Sigmoid colon (tissue), 7 donors: ENCODE measurements at regions of chr4 and their contacts with region 1.

Region 1: DNA sequence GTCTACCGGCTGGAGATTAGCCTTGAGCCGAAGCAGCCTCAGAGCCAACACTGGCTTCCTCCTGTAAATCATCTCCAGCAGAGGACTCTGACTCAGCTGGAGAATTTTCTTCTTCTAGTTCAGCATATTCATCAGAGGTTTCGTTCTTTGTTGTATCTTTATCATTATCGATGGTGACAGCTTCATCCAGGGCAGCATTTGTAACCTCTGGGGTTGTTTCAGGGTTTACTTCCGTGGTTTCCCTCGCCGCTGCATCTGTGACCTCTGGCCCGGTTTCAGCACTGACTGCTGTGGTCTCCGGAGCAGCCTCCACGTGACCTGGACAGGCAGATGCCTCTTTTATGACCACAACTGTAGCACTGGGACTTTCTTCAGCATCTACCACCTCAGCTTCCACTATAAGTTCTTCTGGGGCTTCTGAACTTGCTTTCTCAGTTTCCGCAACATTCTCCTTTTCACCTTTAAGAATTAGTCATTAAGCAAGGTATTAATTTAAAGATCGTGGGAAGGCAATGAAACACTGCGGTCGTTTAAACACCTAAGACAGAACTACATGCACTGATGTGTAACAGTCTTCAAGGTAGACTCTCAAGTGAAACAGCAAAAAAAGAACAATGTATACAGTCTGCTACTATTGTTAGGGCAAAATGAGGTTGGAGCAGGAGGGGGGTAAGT is 13.3 kb downstream of the MGARP start:
- DNase-seq: peak; percentile 90
- H3K4me3 ChIP-seq: peak overlapping the region; percentile 21 to 52 (median 46)
- H3K27ac ChIP-seq: peak overlapping the region; percentile 34 to 76 (median 65)
- H3K4me1 ChIP-seq: peaks cover 0 to 15% (median 12%) of the 10 kb centered on the region in 4 donors
- H3K27me3 ChIP-seq: no peaks in the 10 kb centered on the region
- CTCF ChIP-seq: no peak
- EP300 ChIP-seq: no peak
- POLR2A ChIP-seq: no peak

Region 2: DNA sequence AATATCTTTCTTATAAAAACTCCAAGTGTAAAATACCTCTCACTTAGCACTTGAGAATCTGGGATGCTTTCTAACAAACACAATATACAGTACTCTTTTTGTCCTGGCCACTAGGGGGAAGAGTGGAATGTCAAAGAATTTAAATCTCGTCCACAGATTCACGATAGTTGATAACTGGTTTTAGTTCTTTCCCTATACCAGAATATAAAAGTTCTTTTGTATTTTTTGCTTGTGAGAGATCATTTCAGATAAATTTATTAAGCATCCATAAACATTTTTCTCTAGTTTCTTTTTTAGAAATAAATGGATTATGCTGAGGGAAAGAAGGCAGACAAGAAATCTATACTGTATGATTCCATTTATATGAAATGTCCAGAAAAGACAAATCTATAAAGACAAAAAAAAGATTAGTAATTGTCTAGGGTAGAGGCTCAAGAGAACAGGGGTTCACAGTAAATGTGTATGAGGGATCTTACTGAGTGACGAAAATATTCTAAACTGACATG is 37.1 kb before region 1 on chr4:
- intact Hi-C with region 1: loop called (anchors 2 kb)
- DNase-seq: no peak
- H3K4me3 ChIP-seq: no peak overlapping the region
- H3K27ac ChIP-seq: no peak overlapping the region
- H3K4me1 ChIP-seq: no peaks in the 10 kb centered on the region
- H3K27me3 ChIP-seq: no peaks in the 10 kb centered on the region
- CTCF ChIP-seq: peak; percentile 47 to 77 (median 67)
- EP300 ChIP-seq: no peak
- POLR2A ChIP-seq: no peak